ENCODE measurements at regions of chr11 and their contacts with region 1.

Region 1: DNA sequence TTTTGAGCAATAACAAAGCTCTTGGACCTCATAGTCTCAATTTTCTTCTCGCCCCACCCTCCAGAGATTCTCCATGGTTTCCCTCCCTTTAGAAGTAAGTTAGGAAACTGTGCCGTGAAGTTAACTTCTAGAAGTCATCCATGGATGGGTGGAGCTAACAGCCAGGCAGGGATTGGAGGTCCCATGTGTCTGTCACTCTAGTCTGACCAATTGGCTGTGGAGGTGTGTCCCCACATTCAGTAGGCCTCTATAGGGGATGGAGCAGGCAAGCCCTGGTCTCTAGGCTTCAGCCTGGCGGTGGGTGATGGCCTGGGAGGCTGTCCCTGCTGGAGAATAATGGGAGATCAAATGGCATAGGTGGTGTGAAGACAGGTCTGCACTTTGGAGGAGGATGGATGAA is 50.7 kb downstream of the TP53I11 start:
- DNase-seq: peak; percentile 44
- H3K4me3 Mint-ChIP-seq: no peak overlapping the region
- H3K27ac Mint-ChIP-seq: no peak overlapping the region
- H3K4me1 Mint-ChIP-seq: no peaks in the 10 kb centered on the region
- H3K27me3 Mint-ChIP-seq: peaks cover 86% of the 10 kb centered on the region
- CTCF ChIP-seq: no peak

Region 2: GRCh38 chr11:44556735-44557409 is 343.1 kb before region 1 on chr11:
- CTCF ChIA-PET with region 1: no interaction called
- intact Hi-C with region 1: loop called (anchors 10 kb)
- DNase-seq: peak; percentile 70
- H3K4me3 Mint-ChIP-seq: no peak overlapping the region
- H3K27ac Mint-ChIP-seq: no peak overlapping the region
- H3K4me1 Mint-ChIP-seq: peaks cover 8% of the 10 kb centered on the region
- H3K27me3 Mint-ChIP-seq: peaks cover 21% of the 10 kb centered on the region
- CTCF ChIP-seq: peak; percentile 79

Region 3: GRCh38 chr11:44964526-44965209 is 64.7 kb after region 1 on chr11:
- CTCF ChIA-PET with region 1: no interaction called
- intact Hi-C with region 1: no loop called
- DNase-seq: no peak
- H3K4me3 Mint-ChIP-seq: no peak overlapping the region
- H3K27ac Mint-ChIP-seq: no peak overlapping the region
- H3K4me1 Mint-ChIP-seq: no peaks in the 10 kb centered on the region
- H3K27me3 Mint-ChIP-seq: peaks cover 14% of the 10 kb centered on the region
- CTCF ChIP-seq: no peak

Measured in Calu3 (cell line).